Cardiac septum (tissue), 1 donor: ENCODE measurements at regions of chr16 and their contacts with region 1.

Region 1: DNA sequence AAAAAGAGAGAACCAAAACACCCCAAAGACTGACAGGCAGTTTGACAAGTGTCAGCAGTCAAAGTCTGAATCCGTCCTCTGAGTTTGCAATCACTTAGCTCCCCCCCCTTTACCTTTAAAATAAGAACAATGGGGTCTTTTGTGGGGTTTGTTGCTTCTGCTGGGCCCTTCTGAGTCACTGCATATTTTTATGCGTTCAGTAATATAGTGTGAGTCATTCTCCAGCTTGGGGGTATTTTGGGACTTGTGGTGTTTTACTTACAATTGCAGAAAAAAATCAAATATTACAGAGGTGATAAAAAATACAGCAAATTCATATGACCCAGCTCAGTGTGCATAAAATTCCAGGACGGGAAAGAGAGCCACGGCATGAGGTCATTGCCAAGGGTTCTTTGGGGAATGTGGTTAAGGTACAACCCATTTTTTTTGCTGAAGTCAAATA is 120.1 kb downstream of the CYLD start:
- DNase-seq: no peak

Region 2: DNA sequence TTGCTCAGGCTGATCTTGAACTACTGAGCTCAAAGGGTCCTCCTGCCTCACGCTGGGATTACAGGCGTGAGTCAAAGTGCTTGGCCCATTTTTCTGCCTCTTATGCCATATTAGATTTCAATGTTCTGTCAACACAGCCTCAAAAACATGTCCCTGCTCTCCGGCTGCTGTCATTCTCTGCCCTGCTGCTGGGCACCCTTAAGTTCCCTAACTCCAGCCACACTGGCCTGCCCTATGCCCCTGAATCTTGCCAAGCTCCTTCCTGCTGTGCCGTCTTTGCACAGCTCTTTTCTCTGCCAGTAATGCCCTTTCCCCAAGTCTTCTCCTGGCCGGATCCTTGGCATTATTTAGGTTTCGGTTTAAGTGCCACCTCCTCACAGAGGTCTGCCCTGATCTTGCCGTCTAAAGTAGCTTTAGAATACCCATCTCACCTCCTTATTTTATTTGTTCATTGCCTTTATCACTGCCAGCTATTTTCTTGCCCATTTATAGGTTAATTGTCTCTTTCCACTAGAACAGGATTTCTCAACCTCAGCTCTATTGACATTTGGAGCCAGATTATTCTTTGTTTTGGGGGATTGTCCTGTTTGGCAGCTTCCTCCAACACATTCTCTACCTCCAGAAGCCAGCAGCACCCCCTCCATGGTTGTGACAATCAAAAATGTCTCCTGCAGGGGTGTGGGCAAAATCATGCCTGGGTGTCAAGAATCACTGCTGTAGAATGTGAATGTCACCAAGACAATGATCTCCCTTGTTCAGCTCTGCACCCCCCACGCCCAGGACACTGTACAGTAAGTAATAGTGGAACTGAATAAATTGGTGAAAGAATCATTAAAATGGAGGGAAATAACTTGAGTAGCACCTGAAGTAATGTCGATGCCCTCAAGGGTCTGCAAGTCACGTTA is 48.1 kb after region 1 on chr16:
- intact Hi-C with region 1: no loop called
- DNase-seq: no peak

Region 3: GRCh38 chr16:50925758-50926357 is 63.9 kb after region 1 on chr16:
- intact Hi-C with region 1: loop called (anchors 10 kb)
- DNase-seq: no peak